ENCODE measurements at regions of chr19 and their contacts with region 1.

Region 1: DNA sequence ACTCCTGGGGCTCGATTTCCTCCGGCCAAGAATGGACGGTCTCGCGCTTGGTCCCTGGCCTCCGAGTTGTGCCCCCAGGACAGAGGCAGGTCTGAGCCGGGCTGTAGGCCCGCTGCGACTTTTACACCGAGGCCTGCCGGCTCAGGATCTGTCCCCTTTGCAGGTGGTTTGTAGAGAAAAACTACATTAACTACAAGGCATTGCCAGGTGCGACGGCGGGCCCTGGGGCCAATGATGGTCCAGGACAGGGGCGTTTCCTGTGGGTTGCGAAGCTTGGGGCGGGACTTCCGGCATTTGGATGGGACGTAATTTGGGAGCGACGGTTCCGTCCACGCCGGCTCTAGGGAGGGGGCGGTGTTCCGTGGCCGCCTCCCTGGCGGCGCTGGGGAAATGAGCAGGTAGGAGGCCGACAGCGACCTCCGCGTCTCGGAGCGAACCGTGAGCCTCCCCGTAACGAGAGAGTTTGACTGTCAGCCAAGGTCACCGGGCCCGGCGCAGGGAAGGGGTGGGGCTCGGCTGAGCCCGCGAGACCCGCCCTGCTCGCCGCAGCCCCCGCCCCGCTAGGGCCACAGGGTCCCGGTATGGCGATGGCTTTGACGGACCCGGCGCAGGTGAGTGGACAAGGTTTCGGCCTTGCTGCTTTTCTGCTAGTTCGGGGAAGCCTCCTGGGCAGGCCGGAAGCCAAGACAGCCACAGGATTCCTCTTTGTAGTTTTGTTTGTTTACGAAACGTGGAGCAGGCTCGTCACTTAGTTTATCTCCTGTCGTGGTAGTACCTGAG is at the start of gene ZNF805:
- DNase-seq: peak; percentile 98
- H3K4me3 ChIP-seq: peak within 1 kb of the TSS; percentile 75 to 84 (median 76)
- H3K27ac ChIP-seq: peak within 1 kb of the TSS; percentile 86 to 92 (median 90)
- H3K4me1 ChIP-seq: peaks cover 0 to 31% (median 20%) of the 10 kb centered on the region in 4 donors
- H3K27me3 ChIP-seq: no peaks in the 10 kb centered on the region
- CTCF ChIP-seq: no peak
- EP300 ChIP-seq: no peak
- POLR2A ChIP-seq: peak in 1 of 2 donors; percentile 61
- total RNA-seq, gene ZNF805: 11.8 to 21.6 (median 17.5) TPM

Region 2: GRCh38 chr19:57103573-57104277 is 136.8 kb before region 1 on chr19:
- intact Hi-C with region 1: loop called (anchors 10 kb)
- DNase-seq: peak; percentile 76
- H3K4me3 ChIP-seq: peak overlapping the region in 1 of 4 donors; percentile 28
- H3K27ac ChIP-seq: no peak overlapping the region
- H3K4me1 ChIP-seq: peaks cover 0 to 20% (median 11%) of the 10 kb centered on the region in 4 donors
- H3K27me3 ChIP-seq: peaks cover 12 to 38% (median 20%) of the 10 kb centered on the region in 3 donors
- CTCF ChIP-seq: peak; percentile 75 to 84 (median 80)
- EP300 ChIP-seq: no peak
- POLR2A ChIP-seq: no peak

Region 3: GRCh38 chr19:57191141-57192076 is 49.1 kb before region 1 on chr19 and contains the start of gene ZNF264:
- intact Hi-C with region 1: loop called (anchors 2 kb)
- DNase-seq: peak; percentile 95
- H3K4me3 ChIP-seq: peak within 1 kb of the TSS; percentile 69 to 96 (median 82)
- H3K27ac ChIP-seq: peak within 1 kb of the TSS; percentile 82 to 90 (median 86)
- H3K4me1 ChIP-seq: peaks cover 0 to 30% (median 16%) of the 10 kb centered on the region in 4 donors
- H3K27me3 ChIP-seq: no peaks in the 10 kb centered on the region
- CTCF ChIP-seq: no peak
- EP300 ChIP-seq: no peak
- POLR2A ChIP-seq: peak; percentile 11 to 33
- total RNA-seq, gene ZNF264: 18.5 to 39.6 (median 28.0) TPM

Region 4: DNA sequence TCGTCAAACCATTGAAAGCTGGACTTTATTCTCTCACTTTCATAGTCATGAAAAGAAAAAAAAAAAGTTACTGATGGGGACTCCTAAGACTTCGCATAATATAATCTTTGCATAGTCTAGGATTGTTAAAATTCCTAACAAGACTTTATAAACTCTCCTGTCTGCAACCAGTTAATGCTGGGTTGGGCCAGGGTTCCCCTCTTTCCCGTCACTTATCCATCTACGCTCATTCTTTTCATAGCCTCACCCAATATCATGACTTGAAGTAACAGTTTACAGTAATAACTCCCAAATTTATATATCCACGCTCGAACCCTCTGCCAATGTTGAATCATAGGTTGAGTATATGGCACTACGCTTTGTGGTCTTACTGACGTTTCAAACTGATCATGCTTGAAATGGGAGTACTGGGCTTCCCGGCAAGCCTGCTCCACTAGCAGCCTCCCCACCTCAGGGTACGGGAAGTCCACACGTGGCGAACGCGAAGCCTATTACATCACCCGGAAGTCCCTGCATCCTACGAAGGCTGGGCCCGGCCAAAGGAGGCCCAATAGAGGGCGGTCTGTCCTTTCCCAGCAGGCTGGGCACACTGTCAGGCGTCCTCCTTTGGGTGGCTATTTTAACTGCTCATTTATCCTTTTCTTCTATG is 39.0 kb after region 1 on chr19:
- intact Hi-C with region 1: loop called (anchors 1 kb)
- DNase-seq: peak; percentile 96
- H3K4me3 ChIP-seq: peak overlapping the region; percentile 82 to 97 (median 84)
- H3K27ac ChIP-seq: peak overlapping the region; percentile 95 to 100 (median 98)
- H3K4me1 ChIP-seq: peaks cover 0 to 44% (median 30%) of the 10 kb centered on the region in 4 donors
- H3K27me3 ChIP-seq: no peaks in the 10 kb centered on the region
- CTCF ChIP-seq: no peak
- EP300 ChIP-seq: peak in 2 of 4 donors; percentile 82 to 85
- POLR2A ChIP-seq: no peak

Region 5: GRCh38 chr19:57362997-57363705 is 122.7 kb after region 1 on chr19 and contains the starts of genes TRAPPC2B and ZNF547:
- intact Hi-C with region 1: loop called (anchors 1 kb)
- DNase-seq: peak; percentile 100
- H3K4me3 ChIP-seq: peak within 1 kb of the TSS; percentile 86 to 91 (median 88)
- H3K27ac ChIP-seq: peak within 1 kb of the TSS; percentile 94 to 98 (median 96)
- H3K4me1 ChIP-seq: peaks cover 0 to 17% (median 12%) of the 10 kb centered on the region in 4 donors
- H3K27me3 ChIP-seq: no peaks in the 10 kb centered on the region
- CTCF ChIP-seq: no peak
- EP300 ChIP-seq: peak in 2 of 4 donors; percentile 55 to 97
- POLR2A ChIP-seq: peak in 1 of 2 donors; percentile 59
- total RNA-seq, gene TRAPPC2B: 21.3 to 28.1 (median 27.1) TPM
- total RNA-seq, gene ZNF547: 0.83 to 3.6 (median 2.8) TPM

Measured in sigmoid colon (tissue), 7 donors.